ENCODE measurements at regions of chr1 and their contacts with region 1.

Region 1: DNA sequence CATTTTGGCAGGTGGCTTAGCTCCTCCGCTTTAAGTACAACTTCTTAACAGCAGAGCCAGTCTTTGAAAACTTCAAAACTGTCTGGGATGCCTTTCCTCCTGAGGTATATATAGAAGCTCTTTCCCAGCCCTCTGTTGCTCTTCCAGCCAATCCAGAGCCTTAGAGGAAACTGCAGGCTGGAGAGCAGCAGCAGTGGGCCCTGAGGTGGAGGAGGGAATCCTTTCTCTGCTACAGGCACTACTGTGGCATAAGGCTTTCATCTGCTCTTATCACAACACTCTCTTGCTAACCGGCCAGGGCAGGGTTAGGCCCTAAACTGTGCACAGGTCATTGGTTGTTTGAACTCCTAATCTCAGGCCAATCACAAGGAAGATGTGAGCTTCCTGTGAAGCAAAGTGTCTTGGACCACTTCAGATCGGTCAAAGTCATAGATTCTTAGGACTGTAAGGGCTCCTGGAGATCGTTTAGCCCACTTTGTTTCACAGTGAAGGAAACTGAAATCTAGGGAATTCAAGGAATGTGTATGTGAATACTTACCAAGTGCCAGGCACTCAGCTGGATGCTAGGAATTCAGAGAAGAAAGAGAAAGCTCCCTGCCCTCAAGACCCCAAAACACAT is at the start of gene RGS5:
- DNase-seq: peak in 1 of 2 donors; percentile 50
- ATAC-seq: peak; percentile 87
- H3K4me3 ChIP-seq: peak within 1 kb of the TSS; percentile 94 to 99
- H3K27ac ChIP-seq: peak within 1 kb of the TSS; percentile 88 to 93
- H3K4me1 ChIP-seq: peaks cover 2 to 3% of the 10 kb centered on the region in 2 donors
- H3K27me3 ChIP-seq: no peaks in the 10 kb centered on the region
- total RNA-seq, gene RGS5: 1,469 to 2,702 TPM

Region 2: DNA sequence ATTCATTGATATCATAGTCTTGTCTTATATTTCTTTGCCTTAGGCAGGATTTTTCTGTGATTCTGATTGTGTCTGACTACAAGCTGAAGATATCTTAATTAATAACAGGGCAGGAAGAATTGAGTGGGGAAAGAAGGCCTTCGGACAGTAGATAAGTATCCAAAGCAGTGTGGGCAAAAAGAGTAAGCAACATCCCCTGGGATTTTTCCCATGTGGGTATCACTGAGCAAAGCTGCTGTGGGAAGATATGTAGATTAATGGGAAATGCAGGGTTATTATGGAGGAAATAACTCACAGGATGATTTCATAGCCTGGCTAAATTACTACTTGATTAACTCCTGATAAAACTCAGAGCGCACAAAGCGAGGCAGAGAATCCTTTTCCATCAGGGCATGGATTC is 55.9 kb before region 1 on chr1:
- intact Hi-C with region 1: no loop called
- DNase-seq: no peak
- ATAC-seq: no peak
- H3K4me3 ChIP-seq: no peak overlapping the region
- H3K27ac ChIP-seq: peak overlapping the region in 1 of 2 donors; percentile 25
- H3K4me1 ChIP-seq: peaks cover 6% of the 10 kb centered on the region in 2 donors
- H3K27me3 ChIP-seq: no peaks in the 10 kb centered on the region

Region 3: DNA sequence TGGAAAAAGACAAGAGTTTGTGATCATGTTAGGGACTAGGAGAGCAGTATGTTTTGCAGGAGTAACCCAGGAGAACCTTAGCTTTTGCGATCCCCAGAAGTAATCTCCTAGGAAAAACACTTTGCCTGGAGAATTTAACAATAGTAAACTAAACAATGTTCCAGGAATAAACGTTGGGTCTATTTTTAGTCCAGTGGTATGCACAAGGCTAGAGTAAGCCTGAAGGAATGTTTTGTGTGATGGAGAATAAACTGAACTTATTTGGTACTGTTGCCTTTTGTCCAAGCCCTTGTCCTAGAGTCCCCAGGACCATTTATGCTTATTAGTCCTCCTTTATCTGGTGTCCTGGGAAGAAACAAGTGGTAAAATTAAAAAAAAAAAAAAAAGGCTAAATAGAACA is 28.4 kb after region 1 on chr1:
- intact Hi-C with region 1: loop called in 1 of 2 experiments (anchors 2 kb)
- DNase-seq: no peak
- ATAC-seq: peak; percentile 88
- H3K4me3 ChIP-seq: no peak overlapping the region
- H3K27ac ChIP-seq: peak overlapping the region; percentile 21 to 92
- H3K4me1 ChIP-seq: peaks cover 1 to 3% of the 10 kb centered on the region in 2 donors
- H3K27me3 ChIP-seq: no peaks in the 10 kb centered on the region

Region 4: DNA sequence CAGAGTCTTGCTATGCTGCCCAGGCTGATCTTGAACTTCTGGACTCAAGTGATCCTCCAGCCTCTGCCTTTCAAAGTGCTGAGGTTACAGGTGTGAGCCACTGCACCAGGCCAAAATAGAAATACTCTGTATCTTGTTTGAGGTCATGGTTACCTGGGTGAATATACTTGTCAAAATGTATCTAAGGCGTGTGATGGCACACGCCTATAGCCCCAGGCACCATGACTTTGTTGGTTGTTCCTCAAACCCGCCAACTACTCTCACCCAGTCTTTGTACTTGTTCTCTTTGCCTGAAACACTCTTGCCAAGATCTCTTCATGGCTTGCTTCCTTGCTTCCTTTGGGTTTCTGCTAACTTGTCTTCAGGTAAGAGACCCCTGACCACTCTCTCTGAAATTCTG is 37.8 kb after region 1 on chr1:
- intact Hi-C with region 1: loop called (anchors 5 kb)
- DNase-seq: no peak
- ATAC-seq: no peak
- H3K4me3 ChIP-seq: no peak overlapping the region
- H3K27ac ChIP-seq: no peak overlapping the region
- H3K4me1 ChIP-seq: peaks cover 0 to 3% of the 10 kb centered on the region in 2 donors
- H3K27me3 ChIP-seq: no peaks in the 10 kb centered on the region

Region 5: GRCh38 chr1:163248064-163248463 is 45.1 kb after region 1 on chr1:
- intact Hi-C with region 1: loop called (anchors 5 kb)
- DNase-seq: no peak
- ATAC-seq: no peak
- H3K4me3 ChIP-seq: no peak overlapping the region
- H3K27ac ChIP-seq: peak overlapping the region in 1 of 2 donors; percentile 84
- H3K4me1 ChIP-seq: peaks cover 5% of the 10 kb centered on the region in 2 donors
- H3K27me3 ChIP-seq: no peaks in the 10 kb centered on the region

Region 6: GRCh38 chr1:163258181-163258580 is 55.2 kb after region 1 on chr1:
- intact Hi-C with region 1: no loop called
- DNase-seq: no peak
- ATAC-seq: no peak
- H3K4me3 ChIP-seq: no peak overlapping the region
- H3K27ac ChIP-seq: peak overlapping the region in 1 of 2 donors; percentile 22
- H3K4me1 ChIP-seq: peaks cover 0 to 15% of the 10 kb centered on the region in 2 donors
- H3K27me3 ChIP-seq: no peaks in the 10 kb centered on the region

Measured in aorta (tissue), 5 donors.